ENCODE measurements at regions of chr11 and their contacts with region 1.

Region 1: GRCh38 chr11:85664615-85665481 is at the start of gene CREBZF:
- DNase-seq: peak; percentile 96
- H3K4me3 Mint-ChIP-seq: peak within 1 kb of the TSS; percentile 95
- H3K27ac Mint-ChIP-seq: peak within 1 kb of the TSS; percentile 95
- H3K4me1 Mint-ChIP-seq: peaks cover 27% of the 10 kb centered on the region
- H3K27me3 Mint-ChIP-seq: no peaks in the 10 kb centered on the region
- CTCF ChIP-seq: no peak
- total RNA-seq, gene CREBZF: 34.3 and 36.0 TPM in 2 replicates

Region 2: GRCh38 chr11:85647604-85648299 is 17.1 kb before region 1 on chr11 and contains the start of gene TMEM126A:
- CTCF ChIA-PET with region 1: interaction called, 7 read pairs
- POLR2A ChIA-PET with region 1: interaction called, 254 read pairs
- intact Hi-C with region 1: no loop called
- DNase-seq: peak; percentile 91
- H3K4me3 Mint-ChIP-seq: peak within 1 kb of the TSS; percentile 83
- H3K27ac Mint-ChIP-seq: peak within 1 kb of the TSS; percentile 97
- H3K4me1 Mint-ChIP-seq: peaks cover 8% of the 10 kb centered on the region
- H3K27me3 Mint-ChIP-seq: peaks cover 2% of the 10 kb centered on the region
- CTCF ChIP-seq: no peak
- total RNA-seq, gene TMEM126A: 33.5 and 34.9 TPM in 2 replicates

Region 3: GRCh38 chr11:85844426-85845129 is 179.7 kb after region 1 on chr11:
- CTCF ChIA-PET with region 1: interaction called, 3 read pairs
- POLR2A ChIA-PET with region 1: interaction called, 3 read pairs
- intact Hi-C with region 1: loop called (anchors 1 kb)
- DNase-seq: peak; percentile 91
- H3K4me3 Mint-ChIP-seq: no peak overlapping the region
- H3K27ac Mint-ChIP-seq: peak overlapping the region; percentile 36
- H3K4me1 Mint-ChIP-seq: peaks cover 13% of the 10 kb centered on the region
- H3K27me3 Mint-ChIP-seq: no peaks in the 10 kb centered on the region
- CTCF ChIP-seq: no peak

Measured in MCF 10A (cell line).